Activated CD4-positive, alpha-beta T cell treated with anti-CD3 and anti-CD28 coated beads for 36 hours (primary cell): ENCODE measurements at regions of chr12 and their contacts with region 1.

Region 1: DNA sequence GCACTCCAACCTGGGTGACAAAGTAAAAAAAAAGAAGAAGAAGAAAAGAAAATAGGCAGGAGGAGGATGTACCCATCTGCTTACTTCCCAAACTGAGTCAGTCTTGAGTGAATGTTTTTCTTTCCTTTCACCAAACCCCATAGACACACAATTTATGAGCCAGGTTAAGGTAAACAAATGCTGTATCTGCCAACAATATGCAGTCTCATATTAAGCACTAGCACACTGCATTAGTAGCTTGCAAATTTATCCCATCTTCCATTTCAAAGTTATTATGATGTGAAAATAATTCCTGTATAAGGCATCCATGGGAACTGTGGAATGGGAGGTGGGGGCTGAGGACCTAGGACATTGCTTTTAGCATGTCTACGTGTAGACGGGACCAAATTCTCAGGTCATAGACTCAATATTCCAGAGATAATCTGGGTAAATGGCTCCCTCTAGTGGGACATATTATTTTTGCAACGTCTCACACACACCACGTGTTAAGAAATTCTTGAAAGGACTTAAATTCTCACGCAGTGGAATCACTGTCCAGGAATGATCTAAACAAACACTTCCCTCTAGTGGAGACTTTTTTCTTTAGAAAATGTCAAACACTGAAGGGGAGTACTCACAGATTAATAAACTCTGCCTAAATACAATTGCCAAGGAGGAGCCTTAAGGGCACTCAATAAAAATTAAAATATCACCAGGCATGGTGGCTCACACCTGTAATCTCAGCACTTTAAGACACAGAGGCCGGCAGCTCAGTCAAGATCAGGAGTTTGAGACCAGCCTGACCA is 17.1 kb upstream of the OR10P1 start:
- DNase-seq: peak; percentile 41
- ATAC-seq: peak; percentile 75
- H3K4me3 Mint-ChIP-seq: no peak overlapping the region
- H3K27ac Mint-ChIP-seq: no peak overlapping the region
- H3K4me1 Mint-ChIP-seq: peaks cover 8% of the 10 kb centered on the region
- H3K27me3 Mint-ChIP-seq: peaks cover 37% of the 10 kb centered on the region

Region 2: DNA sequence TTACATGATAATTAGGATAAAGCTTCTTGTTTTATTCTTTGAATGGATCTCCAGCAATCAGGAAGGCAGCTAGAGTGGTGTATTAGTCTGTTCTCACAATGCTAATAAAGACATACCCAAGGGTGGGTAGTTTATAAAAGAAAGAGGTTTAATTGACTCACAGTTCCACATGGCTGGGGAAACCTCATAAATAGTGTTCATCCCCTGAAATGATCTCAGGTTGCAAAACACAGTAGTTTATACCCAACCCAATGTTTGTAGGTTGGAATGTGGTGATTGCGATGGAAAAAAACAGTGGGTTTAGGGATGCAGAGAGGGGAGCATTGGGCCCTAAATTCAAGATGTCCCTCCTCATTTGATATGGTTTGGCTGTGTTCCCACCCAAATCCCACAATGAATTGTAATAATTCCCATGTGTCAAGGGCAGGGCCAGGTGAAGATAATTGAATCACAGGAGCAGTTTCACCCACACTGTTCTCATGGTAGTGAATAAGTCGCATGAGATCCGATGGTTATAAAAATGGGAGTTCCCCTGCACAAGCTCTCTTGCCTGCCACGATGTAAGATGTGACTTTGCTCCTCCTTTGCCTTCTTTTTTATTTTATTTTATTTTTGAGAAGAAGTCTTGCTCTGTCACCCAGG is 753.7 kb before region 1 on chr12:
- CTCF ChIA-PET with region 1: no interaction called
- POLR2A ChIA-PET with region 1: no interaction called
- intact Hi-C with region 1: loop called in 1 of 2 experiments (anchors 10 kb)
- DNase-seq: peak; percentile 10
- ATAC-seq: peak; percentile 80
- H3K4me3 Mint-ChIP-seq: no peak overlapping the region
- H3K27ac Mint-ChIP-seq: no peak overlapping the region
- H3K4me1 Mint-ChIP-seq: peaks cover 29% of the 10 kb centered on the region
- H3K27me3 Mint-ChIP-seq: peaks cover 25% of the 10 kb centered on the region

Region 3: GRCh38 chr12:55188974-55189556 is 430.5 kb before region 1 on chr12:
- CTCF ChIA-PET with region 1: interaction called, 30 read pairs
- POLR2A ChIA-PET with region 1: no interaction called
- intact Hi-C with region 1: loop called (anchors 1 kb)
- DNase-seq: peak; percentile 59
- ATAC-seq: peak; percentile 81
- H3K4me3 Mint-ChIP-seq: no peak overlapping the region
- H3K27ac Mint-ChIP-seq: no peak overlapping the region
- H3K4me1 Mint-ChIP-seq: no peaks in the 10 kb centered on the region
- H3K27me3 Mint-ChIP-seq: peaks cover 32% of the 10 kb centered on the region

Region 4: GRCh38 chr12:55652352-55652751 is 32.8 kb after region 1 on chr12:
- CTCF ChIA-PET with region 1: interaction called, 25 read pairs
- POLR2A ChIA-PET with region 1: no interaction called
- intact Hi-C with region 1: loop called in 1 of 2 experiments (anchors 1 kb)
- DNase-seq: peak; percentile 46
- ATAC-seq: peak; percentile 90
- H3K4me3 Mint-ChIP-seq: no peak overlapping the region
- H3K27ac Mint-ChIP-seq: no peak overlapping the region
- H3K4me1 Mint-ChIP-seq: peaks cover 24% of the 10 kb centered on the region
- H3K27me3 Mint-ChIP-seq: peaks cover 2% of the 10 kb centered on the region